PC-9 (cell line): ENCODE measurements at regions of chr19 and their contacts with region 1.

Region 1: GRCh38 chr19:17677002-17677401 is 11.2 kb downstream of the UNC13A start:
- DNase-seq: peak in 1 of 2 experiments; percentile 14
- H3K4me3 ChIP-seq: no peak overlapping the region
- H3K27ac ChIP-seq: no peak overlapping the region
- H3K4me1 ChIP-seq: peaks cover 9% of the 10 kb centered on the region
- H3K27me3 ChIP-seq: peaks cover 34% of the 10 kb centered on the region
- CTCF ChIP-seq: peak; percentile 50

Region 2: DNA sequence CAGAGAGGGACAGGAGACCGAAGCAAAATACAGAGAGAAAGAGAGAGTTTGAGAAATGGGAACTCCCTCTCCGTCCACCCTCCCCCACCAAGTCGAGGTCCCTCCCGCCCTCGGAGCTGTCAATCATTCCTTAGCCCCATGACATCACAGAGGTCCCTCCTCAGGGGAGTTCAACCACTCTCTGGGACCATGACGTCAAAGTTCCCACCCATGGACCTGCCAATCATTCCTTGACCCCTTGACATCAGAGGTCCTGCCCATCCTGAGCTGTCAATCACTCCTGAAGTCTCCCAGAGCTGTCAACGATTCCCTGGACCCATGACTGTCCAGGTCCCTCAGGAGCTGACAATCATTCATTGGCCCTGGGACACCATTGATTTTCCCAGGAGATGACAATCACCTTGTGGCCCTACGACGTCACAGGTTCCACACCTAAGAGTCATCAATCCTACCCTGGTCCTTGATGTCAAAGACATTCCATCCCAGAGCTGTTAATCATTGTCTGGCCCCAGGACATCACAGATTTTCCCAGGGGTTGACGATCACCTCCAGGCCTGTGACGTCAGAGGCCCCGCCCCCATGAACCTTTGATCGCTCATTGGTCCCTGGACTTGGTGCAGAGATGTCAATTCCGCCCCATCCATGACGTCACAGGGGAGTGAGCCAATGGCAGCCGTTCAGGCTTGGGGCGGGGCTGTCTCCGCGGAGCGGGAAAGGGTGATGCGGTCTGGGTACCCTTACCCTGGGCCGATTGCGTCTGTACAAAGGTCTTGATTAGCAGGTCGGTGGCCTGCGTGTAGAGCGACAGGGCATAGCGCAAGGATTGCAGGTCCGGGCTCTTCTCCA is 59.8 kb before region 1 on chr19:
- CTCF ChIA-PET with region 1: no interaction called
- POLR2A ChIA-PET with region 1: interaction called, 16 read pairs
- intact Hi-C with region 1: no loop called
- DNase-seq: peak in 1 of 2 experiments; percentile 81
- H3K4me3 ChIP-seq: no peak overlapping the region
- H3K27ac ChIP-seq: no peak overlapping the region
- H3K4me1 ChIP-seq: no peaks in the 10 kb centered on the region
- H3K27me3 ChIP-seq: peaks cover 14% of the 10 kb centered on the region; the same call in 1 of the 2 replicates
- CTCF ChIP-seq: no peak